ENCODE measurements at regions of chr3 and their contacts with region 1.

Region 1: DNA sequence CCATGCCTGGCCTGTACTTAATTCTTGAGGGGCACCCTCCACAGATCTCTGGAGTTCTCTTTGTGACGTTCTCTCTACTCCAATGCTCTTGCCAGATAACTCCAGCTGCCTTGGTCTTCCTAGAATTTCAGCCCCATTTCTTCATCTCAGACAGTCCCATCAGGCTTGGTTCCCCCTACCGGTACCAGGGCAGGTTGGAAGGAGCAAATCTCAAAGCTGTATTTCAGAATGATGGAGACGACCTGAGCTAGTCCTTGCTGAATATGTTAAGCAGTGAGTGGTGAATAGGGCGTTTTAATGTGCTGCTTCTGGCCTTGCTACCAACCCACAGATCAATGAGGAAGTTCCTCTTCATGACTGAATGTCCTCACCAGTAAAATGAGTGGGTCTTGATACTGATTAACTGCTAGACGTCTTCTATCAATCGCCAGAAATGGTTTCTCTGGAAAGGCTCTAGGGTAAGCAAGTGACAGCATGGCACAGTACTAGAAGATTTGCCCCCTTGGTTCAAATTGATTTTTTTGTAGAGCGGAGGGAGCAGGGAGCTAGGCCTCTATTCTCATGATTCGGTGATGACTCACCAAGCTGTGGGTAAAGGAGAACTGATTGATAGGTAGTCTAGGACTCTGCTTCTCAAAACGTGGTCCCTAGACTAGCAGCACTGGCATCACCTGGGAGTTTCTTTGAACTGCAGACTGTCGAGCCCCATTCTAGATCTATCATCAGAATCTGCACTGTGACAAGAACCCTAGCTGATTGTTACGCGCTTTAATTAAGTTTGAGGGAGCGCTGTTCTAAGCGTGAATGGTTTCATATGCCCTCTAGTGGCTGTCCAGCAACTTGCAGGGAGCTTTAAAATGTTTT is 67.8 kb downstream of the UBP1 start:
- DNase-seq: peak; percentile 84
- ATAC-seq: peak; percentile 88
- H3K4me3 ChIP-seq: peak overlapping the region; percentile 25; the same call in 1 of the 2 replicates
- H3K27ac ChIP-seq: peak overlapping the region; percentile 6; the same call in 1 of the 2 replicates
- H3K4me1 ChIP-seq: peaks cover 10% of the 10 kb centered on the region
- H3K27me3 ChIP-seq: no peaks in the 10 kb centered on the region
- CTCF ChIP-seq: peak; percentile 99

Region 2: DNA sequence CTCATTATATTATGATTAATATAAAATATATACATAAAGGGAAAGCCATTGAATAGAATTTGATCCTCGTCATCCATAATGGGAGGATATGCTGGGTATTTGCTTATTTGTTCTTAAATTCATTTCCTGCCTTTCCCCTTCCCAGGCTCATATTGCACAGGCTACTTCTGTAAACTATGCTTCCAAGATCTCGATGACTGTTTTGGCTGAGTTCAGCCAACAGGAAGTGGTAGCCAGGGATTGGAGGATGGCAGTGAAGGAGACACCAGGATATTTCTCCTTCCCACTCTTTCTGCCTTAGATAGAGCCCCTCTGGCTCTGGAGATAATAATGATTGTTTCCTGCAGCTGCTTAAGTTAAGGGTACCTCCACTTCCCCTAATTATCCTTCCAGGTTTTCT is 757.5 kb before region 1 on chr3:
- CTCF ChIA-PET with region 1: no interaction called
- POLR2A ChIA-PET with region 1: no interaction called
- intact Hi-C with region 1: no loop called
- DNase-seq: peak; percentile 84
- ATAC-seq: peak; percentile 99
- H3K4me3 ChIP-seq: no peak overlapping the region
- H3K27ac ChIP-seq: peak overlapping the region; percentile 62
- H3K4me1 ChIP-seq: peaks cover 27% of the 10 kb centered on the region
- H3K27me3 ChIP-seq: no peaks in the 10 kb centered on the region
- CTCF ChIP-seq: no peak

Region 3: DNA sequence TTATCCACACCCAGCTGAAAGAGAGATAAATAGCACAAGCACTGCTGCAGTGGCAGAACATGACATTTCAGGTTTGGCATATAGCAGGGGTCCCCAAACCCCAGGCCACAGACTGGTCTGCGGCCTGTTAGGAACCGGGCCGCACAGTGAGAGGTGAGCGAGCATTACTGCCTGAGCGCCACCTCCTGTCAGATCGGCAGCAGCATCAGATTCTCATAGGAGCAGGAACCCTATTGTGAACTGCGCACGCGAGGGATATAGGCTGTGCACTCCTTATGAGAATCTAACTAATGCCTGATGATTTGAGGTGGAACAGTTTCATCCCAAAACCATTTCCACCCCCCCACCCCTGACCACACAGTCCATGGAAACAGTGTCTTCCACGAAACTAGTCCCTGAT is 366.4 kb before region 1 on chr3:
- CTCF ChIA-PET with region 1: no interaction called
- POLR2A ChIA-PET with region 1: no interaction called
- intact Hi-C with region 1: no loop called
- DNase-seq: no peak
- ATAC-seq: no peak
- H3K4me3 ChIP-seq: no peak overlapping the region
- H3K27ac ChIP-seq: no peak overlapping the region
- H3K4me1 ChIP-seq: no peaks in the 10 kb centered on the region
- H3K27me3 ChIP-seq: no peaks in the 10 kb centered on the region
- CTCF ChIP-seq: no peak

Region 4: DNA sequence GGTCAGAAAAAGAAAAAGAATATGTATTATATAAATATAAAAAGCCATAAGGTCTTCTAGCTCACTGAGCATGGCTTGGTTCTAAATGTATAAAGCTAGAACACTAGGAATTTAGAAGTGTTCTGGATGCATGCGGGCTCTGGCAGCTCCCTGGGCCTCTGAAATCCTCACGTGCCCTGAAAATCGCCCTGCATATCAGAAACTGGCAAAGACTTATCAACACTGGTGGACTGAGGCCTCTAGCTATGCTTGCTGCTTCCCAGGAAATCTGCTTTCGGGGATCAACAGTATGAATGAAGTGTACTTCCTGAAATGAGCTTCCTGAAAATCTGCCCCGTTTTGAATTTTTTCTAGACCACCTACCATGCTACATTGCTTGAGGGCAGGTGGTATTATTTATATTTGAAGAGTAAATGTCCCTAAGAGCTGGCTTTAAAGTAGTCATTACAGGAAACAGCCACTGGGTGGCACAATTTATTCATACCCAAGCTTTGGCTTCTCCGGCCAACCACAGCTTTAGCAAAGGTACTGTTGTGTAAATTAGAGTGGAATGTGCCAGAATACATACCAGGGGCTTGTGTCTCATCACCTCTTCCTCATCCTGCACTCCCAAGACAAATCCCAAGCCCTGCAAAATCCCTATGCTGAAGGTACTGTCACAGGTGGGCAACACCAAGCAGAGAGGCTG is 241.0 kb before region 1 on chr3:
- CTCF ChIA-PET with region 1: interaction called, 64 read pairs
- POLR2A ChIA-PET with region 1: interaction called, 3 read pairs
- intact Hi-C with region 1: loop called (anchors 1 kb)
- DNase-seq: peak; percentile 85
- ATAC-seq: peak; percentile 83
- H3K4me3 ChIP-seq: no peak overlapping the region
- H3K27ac ChIP-seq: no peak overlapping the region
- H3K4me1 ChIP-seq: 0 out of 2 replicates have a peak, but pooled peaks cover 3% of the 10 kb centered on the region
- H3K27me3 ChIP-seq: no peaks in the 10 kb centered on the region
- CTCF ChIP-seq: peak; percentile 94

Region 5: DNA sequence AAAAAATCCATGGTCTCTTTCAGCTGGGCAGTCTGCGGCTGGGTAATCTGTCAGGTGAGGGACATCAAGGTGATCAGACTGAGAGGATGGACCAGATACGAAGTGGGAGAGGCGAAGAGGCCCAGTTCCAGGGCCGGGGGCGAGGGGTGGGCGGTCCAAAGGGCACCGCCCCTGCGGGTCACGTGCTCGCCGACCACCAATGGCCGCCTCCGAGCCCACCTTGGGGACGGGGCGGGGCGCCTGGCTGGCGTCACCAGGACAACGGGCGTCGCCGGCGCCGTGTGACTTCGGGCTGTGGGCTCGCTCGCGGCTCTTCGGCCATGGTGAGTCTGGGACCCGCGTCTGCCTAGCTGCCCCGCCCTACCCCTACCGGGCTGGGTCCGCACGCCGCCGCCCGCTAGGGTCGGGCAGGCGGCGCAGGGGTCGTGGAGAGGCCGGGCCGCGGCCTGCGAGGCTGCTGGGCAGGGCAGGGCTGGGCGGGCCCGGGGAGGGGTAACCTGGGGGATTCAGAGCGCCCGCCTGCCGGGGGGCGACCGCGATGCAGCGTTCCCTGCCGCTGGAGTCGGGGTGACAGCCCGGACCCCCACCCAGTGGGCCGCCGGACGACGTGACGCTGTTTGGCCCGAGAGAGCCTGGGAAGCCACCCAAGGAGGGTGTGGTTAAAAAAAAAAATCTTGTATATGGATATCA is 95.1 kb before region 1 on chr3 and contains the start of gene FBXL2:
- CTCF ChIA-PET with region 1: interaction called, 3 read pairs
- POLR2A ChIA-PET with region 1: interaction called, 3 read pairs
- intact Hi-C with region 1: loop called (anchors 2 kb)
- DNase-seq: peak; percentile 87
- ATAC-seq: peak; percentile 93
- H3K4me3 ChIP-seq: peak within 1 kb of the TSS; percentile 74
- H3K27ac ChIP-seq: no peak within 1 kb of the TSS
- H3K4me1 ChIP-seq: peaks cover 9% of the 10 kb centered on the region
- H3K27me3 ChIP-seq: no peaks in the 10 kb centered on the region
- CTCF ChIP-seq: no peak
- total RNA-seq, gene FBXL2: 7.2 and 9.4 TPM in 2 replicates

Region 6: GRCh38 chr3:33318709-33319380 is 53.6 kb before region 1 on chr3:
- CTCF ChIA-PET with region 1: no interaction called
- POLR2A ChIA-PET with region 1: no interaction called
- intact Hi-C with region 1: loop called (anchors 2 kb)
- DNase-seq: peak; percentile 26
- ATAC-seq: peak; percentile 31; the same call in 1 of the 2 replicates
- H3K4me3 ChIP-seq: no peak overlapping the region
- H3K27ac ChIP-seq: no peak overlapping the region
- H3K4me1 ChIP-seq: peaks cover 38% of the 10 kb centered on the region
- H3K27me3 ChIP-seq: no peaks in the 10 kb centered on the region
- CTCF ChIP-seq: peak; percentile 37

Region 7: GRCh38 chr3:33420966-33421365 is 48.5 kb after region 1 on chr3:
- CTCF ChIA-PET with region 1: interaction called, 16 read pairs
- POLR2A ChIA-PET with region 1: no interaction called
- intact Hi-C with region 1: no loop called
- DNase-seq: peak; percentile 34
- ATAC-seq: peak; percentile 57
- H3K4me3 ChIP-seq: no peak overlapping the region
- H3K27ac ChIP-seq: no peak overlapping the region
- H3K4me1 ChIP-seq: peaks cover 8% of the 10 kb centered on the region; the same call in 1 of the 2 replicates
- H3K27me3 ChIP-seq: no peaks in the 10 kb centered on the region
- CTCF ChIP-seq: peak; percentile 47; the same call in 1 of the 2 replicates

Measured in PC-3 (cell line).